Aorta (tissue), 5 donors: ENCODE measurements at regions of chr10 and their contacts with region 1.

Region 1: DNA sequence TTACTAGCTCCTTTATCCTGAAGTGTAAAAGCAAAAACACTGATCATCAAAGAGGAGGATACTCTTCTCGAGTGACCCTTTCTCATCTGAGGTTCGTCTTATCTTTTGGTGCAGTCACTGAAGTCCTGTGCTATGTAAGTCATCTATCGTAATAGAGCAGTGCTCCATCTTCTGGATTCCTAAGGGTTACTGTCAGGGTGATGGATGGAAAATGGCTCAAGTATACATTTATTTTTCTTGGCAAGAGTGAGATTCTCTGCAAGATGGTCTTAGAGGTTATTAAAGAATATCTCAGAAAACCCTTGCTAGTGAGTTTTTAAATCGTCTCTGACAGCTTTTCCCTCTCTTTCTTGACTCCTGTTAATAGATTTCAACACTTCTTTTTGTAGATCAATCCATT is 12.4 kb downstream of the PRKG1 start:
- DNase-seq: no peak
- ATAC-seq: no peak
- H3K4me3 ChIP-seq: no peak overlapping the region
- H3K27ac ChIP-seq: no peak overlapping the region
- H3K4me1 ChIP-seq: peaks cover 4 to 10% of the 10 kb centered on the region in 2 donors
- H3K27me3 ChIP-seq: no peaks in the 10 kb centered on the region

Region 2: GRCh38 chr10:50968386-50969091 is 118.2 kb before region 1 on chr10:
- intact Hi-C with region 1: no loop called
- DNase-seq: no peak
- ATAC-seq: no peak
- H3K4me3 ChIP-seq: no peak overlapping the region
- H3K27ac ChIP-seq: no peak overlapping the region
- H3K4me1 ChIP-seq: no peaks in the 10 kb centered on the region
- H3K27me3 ChIP-seq: no peaks in the 10 kb centered on the region

Region 3: GRCh38 chr10:51047857-51048256 is 38.9 kb before region 1 on chr10:
- intact Hi-C with region 1: no loop called
- DNase-seq: no peak
- ATAC-seq: peak; percentile 78
- H3K4me3 ChIP-seq: no peak overlapping the region
- H3K27ac ChIP-seq: no peak overlapping the region
- H3K4me1 ChIP-seq: peaks cover 2 to 8% of the 10 kb centered on the region in 2 donors
- H3K27me3 ChIP-seq: no peaks in the 10 kb centered on the region

Region 4: GRCh38 chr10:51180141-51180540 is 93.4 kb after region 1 on chr10:
- intact Hi-C with region 1: loop called in 1 of 2 experiments (anchors 5 kb)
- DNase-seq: no peak
- ATAC-seq: no peak
- H3K4me3 ChIP-seq: no peak overlapping the region
- H3K27ac ChIP-seq: no peak overlapping the region
- H3K4me1 ChIP-seq: peaks cover 0 to 2% of the 10 kb centered on the region in 2 donors
- H3K27me3 ChIP-seq: no peaks in the 10 kb centered on the region

Region 5: GRCh38 chr10:51214207-51215196 is 127.8 kb after region 1 on chr10:
- intact Hi-C with region 1: no loop called
- DNase-seq: no peak
- ATAC-seq: no peak
- H3K4me3 ChIP-seq: no peak overlapping the region
- H3K27ac ChIP-seq: peak overlapping the region in 1 of 2 donors; percentile 44
- H3K4me1 ChIP-seq: peaks cover 4 to 7% of the 10 kb centered on the region in 2 donors
- H3K27me3 ChIP-seq: no peaks in the 10 kb centered on the region

Region 6: DNA sequence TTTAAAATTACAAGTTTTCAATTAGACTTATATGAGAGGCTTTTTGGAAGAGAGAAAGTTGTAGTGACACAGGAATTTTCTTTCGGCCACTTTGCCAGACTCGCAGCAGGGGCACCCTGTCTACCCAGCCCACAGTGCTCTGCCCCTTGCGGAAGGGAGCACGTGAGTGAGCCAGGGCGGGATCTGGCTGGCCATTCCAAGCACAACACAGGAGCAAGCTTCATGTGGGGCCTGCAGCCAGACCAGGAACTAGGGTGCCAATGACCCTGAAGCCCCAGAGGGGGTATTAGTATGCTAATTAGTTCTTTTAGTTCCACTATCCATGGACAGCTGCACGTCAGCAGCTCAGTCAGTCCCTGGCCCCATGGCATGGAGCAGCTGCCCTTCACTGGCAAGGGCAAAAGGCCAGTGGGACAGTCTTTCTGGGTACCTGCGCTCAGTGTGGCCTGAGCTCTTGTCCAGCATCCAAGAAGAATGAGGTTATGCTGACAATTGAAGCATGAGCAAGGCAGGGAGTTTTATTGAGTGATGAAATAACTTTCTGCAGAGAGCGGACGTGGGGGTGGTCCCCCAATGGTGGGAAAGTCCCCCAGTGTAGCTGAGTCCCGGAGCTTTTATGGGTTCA is 863.8 kb after region 1 on chr10:
- intact Hi-C with region 1: no loop called
- DNase-seq: peak; percentile 54 to 69
- ATAC-seq: peak; percentile 87
- H3K4me3 ChIP-seq: no peak overlapping the region
- H3K27ac ChIP-seq: peak overlapping the region; percentile 19 to 54
- H3K4me1 ChIP-seq: peaks cover 0 to 3% of the 10 kb centered on the region in 2 donors
- H3K27me3 ChIP-seq: no peaks in the 10 kb centered on the region